ENCODE measurements at regions of chr7 and their contacts with region 1.

Region 1: DNA sequence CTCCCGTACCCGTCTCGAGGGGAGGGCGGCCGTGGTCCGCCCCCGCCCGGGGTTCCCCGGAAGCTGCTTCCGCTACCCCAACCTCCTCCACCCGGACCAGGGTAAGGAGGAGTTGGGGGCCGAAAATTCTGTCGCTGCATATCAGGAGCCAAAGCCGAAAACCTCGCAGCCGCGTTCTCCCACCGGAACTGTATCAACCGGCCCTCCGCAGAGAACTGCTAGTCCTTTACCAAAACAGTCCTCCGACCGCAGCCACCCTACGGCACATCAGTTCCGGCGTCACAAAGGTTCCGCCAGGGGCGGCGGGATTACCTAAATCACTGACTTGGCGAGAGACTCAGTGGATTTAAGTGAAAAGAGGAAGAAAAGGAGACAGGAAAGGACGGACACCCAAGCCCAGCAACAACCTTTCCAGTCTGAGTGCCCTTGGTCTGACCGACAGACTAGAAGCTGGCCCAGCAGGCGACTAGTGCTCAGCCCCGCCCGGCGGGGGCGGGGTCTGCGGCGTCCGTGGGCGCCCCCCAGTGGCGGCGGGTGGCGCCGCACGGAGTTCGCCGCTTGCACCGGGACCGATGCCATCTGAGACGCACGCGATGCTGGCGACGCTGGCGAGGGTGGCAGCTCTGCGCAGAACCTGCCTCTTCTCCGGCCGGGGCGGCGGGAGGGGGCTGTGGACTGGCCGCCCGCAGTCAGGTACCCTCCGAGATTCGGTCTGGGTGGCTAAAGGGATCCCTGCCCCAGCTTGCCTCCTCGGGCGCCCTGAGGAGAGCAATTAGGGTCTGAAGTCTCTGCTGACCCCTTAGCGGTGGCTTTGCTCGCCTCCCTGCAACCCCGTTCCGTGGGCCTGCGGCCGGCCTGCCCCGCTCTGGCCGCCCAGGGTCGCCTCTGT is at the starts of genes MPLKIP and SUGCT:
- DNase-seq: peak; percentile 93
- ATAC-seq: peak; percentile 97
- total RNA-seq, gene MPLKIP: 17.8 TPM
- total RNA-seq, gene SUGCT: 4.4 TPM

Region 2: DNA sequence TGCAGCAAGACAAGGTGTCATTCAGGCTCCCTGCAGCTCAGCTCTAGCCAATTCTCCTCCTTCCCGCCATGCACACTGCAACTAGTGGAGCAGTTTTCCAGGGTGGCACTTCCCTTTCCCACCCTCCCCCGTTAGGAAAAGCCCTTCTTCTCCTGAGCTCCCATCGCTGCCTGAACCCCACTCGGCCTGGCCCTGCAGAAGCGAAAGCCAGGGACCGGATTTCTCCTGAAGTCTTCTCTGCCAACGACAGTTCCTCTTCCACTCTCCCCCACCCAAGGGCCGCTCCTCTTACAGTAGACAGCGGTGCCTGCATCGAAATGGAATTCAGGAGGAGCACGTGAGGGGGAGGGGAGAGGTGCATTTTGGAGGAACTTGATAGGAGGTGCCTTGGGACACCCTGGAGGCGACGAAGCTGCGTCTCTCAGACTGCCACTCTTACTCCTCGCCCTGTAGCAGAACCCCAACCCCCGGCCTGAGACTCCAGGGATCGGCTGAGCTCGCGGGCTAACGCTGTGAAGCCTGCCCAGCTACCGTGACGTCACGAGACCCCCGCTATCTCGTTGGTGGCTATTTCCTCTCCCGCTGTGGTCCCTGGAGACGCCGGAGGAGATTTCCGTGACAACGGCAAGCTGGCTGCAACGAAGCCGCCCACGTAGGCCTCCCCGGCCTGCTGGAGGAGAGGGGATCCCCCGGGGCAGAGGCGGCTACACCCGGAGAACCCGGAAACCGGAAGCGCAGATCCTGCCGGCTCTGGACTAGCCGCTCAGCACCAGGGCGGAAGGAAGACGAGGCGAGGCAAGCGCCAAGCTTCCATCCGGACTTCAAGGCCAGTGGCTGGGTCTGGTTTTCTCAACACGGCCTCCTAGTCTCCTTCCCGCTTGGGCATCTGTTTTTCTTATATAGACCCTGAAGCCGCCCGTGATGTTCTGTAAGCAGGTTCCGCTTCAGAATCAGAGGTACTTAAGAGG is 401.6 kb before region 1 on chr7:
- intact Hi-C with region 1: no loop called
- DNase-seq: peak; percentile 98
- ATAC-seq: peak; percentile 97

Region 3: GRCh38 chr7:40057292-40057691 is 77.4 kb before region 1 on chr7:
- intact Hi-C with region 1: loop called (anchors 10 kb)
- DNase-seq: no peak
- ATAC-seq: peak; percentile 64

Measured in Right ventricle myocardium inferior (tissue), 1 donor.